CD4-positive, alpha-beta T cell (primary cell): ENCODE measurements at regions of chr2 and their contacts with region 1.

Region 1: DNA sequence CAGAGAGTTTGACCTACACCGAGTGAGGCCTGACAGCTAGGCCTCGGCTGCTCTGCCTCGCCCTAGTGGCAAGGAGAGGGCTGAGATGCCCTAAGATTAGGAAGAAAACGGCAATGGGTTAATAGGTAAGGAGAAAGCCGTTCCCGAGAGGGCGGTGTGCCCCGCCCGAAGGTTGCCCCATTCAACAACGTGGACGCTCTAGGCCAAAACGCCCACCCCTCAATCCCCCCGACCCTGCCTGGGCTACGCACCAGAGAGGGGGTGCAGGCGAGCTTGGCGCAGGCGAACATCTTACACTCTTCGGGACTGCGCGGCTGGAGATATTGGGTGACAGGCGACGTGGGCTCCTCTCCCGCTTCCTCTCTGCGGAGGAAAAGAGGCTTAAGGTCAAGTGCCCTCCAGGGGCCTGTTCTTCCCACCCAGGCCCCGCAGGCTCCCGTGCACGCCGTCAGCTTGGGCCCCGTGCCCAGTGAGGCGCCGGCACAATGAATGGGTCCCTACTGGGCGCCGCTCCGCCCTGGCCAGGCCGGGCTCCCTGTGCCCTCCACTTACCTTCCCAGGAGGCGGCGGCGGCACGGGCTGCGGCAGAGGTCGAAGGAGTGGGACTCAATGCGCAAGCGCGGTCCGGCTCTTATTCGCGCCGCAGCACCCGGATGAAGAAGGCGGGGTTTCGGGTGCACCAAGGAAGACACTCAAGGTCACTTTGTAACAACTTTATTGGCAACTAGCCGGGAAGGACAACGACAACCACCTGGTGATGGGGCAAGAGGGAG is at the start of gene ATP5MC3:
- DNase-seq: peak; percentile 85 to 98 (median 89)
- ATAC-seq: peak; percentile 88
- H3K4me3 ChIP-seq: peak within 1 kb of the TSS; percentile 73
- H3K4me3 Mint-ChIP-seq: peak within 1 kb of the TSS; percentile 96
- H3K27ac ChIP-seq: peak within 1 kb of the TSS; percentile 49 to 75
- H3K27ac Mint-ChIP-seq: peak within 1 kb of the TSS; percentile 84
- H3K4me1 ChIP-seq: peaks cover 16% of the 10 kb centered on the region
- H3K4me1 Mint-ChIP-seq: peaks cover 41% of the 10 kb centered on the region
- H3K27me3 ChIP-seq: no peaks in the 10 kb centered on the region
- H3K27me3 Mint-ChIP-seq: no peaks in the 10 kb centered on the region
- CTCF ChIP-seq: no peak
- total RNA-seq, gene ATP5MC3: 79.5 to 81.6 TPM

Region 2: GRCh38 chr2:174997110-174997509 is 184.2 kb before region 1 on chr2:
- CTCF ChIA-PET with region 1: no interaction called
- POLR2A ChIA-PET with region 1: no interaction called
- intact Hi-C with region 1: no loop called
- DNase-seq: no peak
- ATAC-seq: no peak
- H3K4me3 ChIP-seq: no peak overlapping the region
- H3K4me3 Mint-ChIP-seq: no peak overlapping the region
- H3K27ac ChIP-seq: no peak overlapping the region
- H3K27ac Mint-ChIP-seq: no peak overlapping the region
- H3K4me1 ChIP-seq: no peaks in the 10 kb centered on the region
- H3K4me1 Mint-ChIP-seq: no peaks in the 10 kb centered on the region
- H3K27me3 ChIP-seq: peaks cover 8 to 22% of the 10 kb centered on the region in 2 experiments
- H3K27me3 Mint-ChIP-seq: peaks cover 37% of the 10 kb centered on the region
- CTCF ChIP-seq: no peak

Region 3: GRCh38 chr2:175167792-175168563 is 13.3 kb before region 1 on chr2 and contains the start of gene ATF2:
- CTCF ChIA-PET with region 1: interaction called, 3 read pairs
- POLR2A ChIA-PET with region 1: interaction called, 54 read pairs
- intact Hi-C with region 1: loop called (anchors 1 kb)
- DNase-seq: peak; percentile 94 to 100 (median 96)
- ATAC-seq: peak; percentile 90
- H3K4me3 ChIP-seq: peak within 1 kb of the TSS; percentile 90
- H3K4me3 Mint-ChIP-seq: peak within 1 kb of the TSS; percentile 91
- H3K27ac ChIP-seq: peak within 1 kb of the TSS; percentile 84 to 90
- H3K27ac Mint-ChIP-seq: peak within 1 kb of the TSS; percentile 90
- H3K4me1 ChIP-seq: peaks cover 18% of the 10 kb centered on the region
- H3K4me1 Mint-ChIP-seq: peaks cover 66% of the 10 kb centered on the region
- H3K27me3 ChIP-seq: no peaks in the 10 kb centered on the region
- H3K27me3 Mint-ChIP-seq: no peaks in the 10 kb centered on the region
- CTCF ChIP-seq: no peak
- total RNA-seq, gene ATF2: 44.7 to 44.8 TPM